ENCODE measurements at regions of chr5 and their contacts with region 1.

Region 1: DNA sequence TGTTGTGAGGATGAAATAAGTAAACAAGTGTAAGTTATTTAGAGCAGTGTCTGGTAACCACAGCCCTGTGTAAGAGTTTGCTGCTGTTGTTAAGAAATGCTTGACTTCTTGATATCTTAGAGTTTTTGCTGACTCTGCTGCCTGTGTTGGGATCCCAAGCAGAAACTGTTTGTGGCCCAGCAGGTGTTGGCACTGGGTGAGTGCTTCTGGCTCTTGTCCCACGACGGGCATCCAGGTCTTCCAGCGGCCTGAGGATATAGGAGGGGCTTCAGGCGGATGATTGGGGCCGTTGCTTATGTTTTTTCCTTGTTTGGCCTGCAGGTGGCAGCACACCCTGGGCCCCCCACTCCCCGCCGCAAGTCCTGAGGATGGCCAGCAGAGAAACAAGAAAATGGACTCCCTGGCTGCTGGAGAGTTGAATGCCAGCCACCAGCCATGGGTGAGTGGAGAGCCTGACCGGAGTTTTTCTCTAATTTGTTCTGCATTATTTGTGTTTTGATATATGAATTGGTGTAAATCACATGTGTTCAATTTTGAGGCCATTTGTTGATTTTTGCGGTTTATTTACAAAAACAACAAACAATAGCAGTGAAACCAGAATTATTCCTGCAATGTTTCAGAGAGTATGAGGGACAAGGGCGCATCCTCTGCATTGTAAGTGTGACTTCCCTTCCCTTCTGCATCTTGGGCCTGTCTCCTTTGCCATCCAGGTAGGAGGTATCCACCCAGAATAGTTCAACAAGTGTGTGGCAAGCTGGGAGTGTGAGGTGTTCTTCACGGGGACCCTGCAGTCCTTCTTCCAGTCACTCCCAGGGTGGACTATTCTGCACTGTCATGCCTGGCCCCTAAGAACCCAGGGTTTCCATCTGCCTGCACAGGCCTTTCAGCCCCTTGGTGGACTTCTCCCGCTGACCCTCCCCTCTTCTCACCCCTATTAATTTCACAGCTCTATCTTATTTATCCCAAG is 50.3 kb downstream of the SLC22A5 start:
- DNase-seq: peak; percentile 27 to 84 (median 54)
- ATAC-seq: peak; percentile 76
- H3K4me3 ChIP-seq: peak overlapping the region; percentile 37
- H3K4me3 Mint-ChIP-seq: peak overlapping the region; percentile 85
- H3K27ac ChIP-seq: peak overlapping the region; percentile 81 to 88
- H3K27ac Mint-ChIP-seq: peak overlapping the region; percentile 92
- H3K4me1 ChIP-seq: peaks cover 91% of the 10 kb centered on the region
- H3K4me1 Mint-ChIP-seq: peaks cover 94% of the 10 kb centered on the region
- H3K27me3 ChIP-seq: no peaks in the 10 kb centered on the region
- H3K27me3 Mint-ChIP-seq: no peaks in the 10 kb centered on the region
- CTCF ChIP-seq: peak; percentile 85

Region 2: GRCh38 chr5:132437604-132438266 is 17.9 kb after region 1 on chr5:
- CTCF ChIA-PET with region 1: interaction called, 3 read pairs
- POLR2A ChIA-PET with region 1: interaction called, 3 read pairs
- intact Hi-C with region 1: loop called in 1 of 2 experiments (anchors 2 kb)
- DNase-seq: peak; percentile 25 to 87 (median 62)
- ATAC-seq: peak; percentile 96
- H3K4me3 ChIP-seq: peak overlapping the region; percentile 21
- H3K4me3 Mint-ChIP-seq: peak overlapping the region; percentile 42
- H3K27ac ChIP-seq: peak overlapping the region; percentile 67 to 72
- H3K27ac Mint-ChIP-seq: peak overlapping the region; percentile 90
- H3K4me1 ChIP-seq: peaks cover 87% of the 10 kb centered on the region
- H3K4me1 Mint-ChIP-seq: peaks cover 89% of the 10 kb centered on the region
- H3K27me3 ChIP-seq: no peaks in the 10 kb centered on the region
- H3K27me3 Mint-ChIP-seq: no peaks in the 10 kb centered on the region
- CTCF ChIP-seq: no peak

Region 3: GRCh38 chr5:132466433-132467286 is 46.9 kb after region 1 on chr5:
- CTCF ChIA-PET with region 1: interaction called, 4 read pairs
- POLR2A ChIA-PET with region 1: interaction called, 645 read pairs
- intact Hi-C with region 1: loop called (anchors 2 to 5 kb)
- DNase-seq: peak in 13 of 14 experiments; percentile 56 to 90 (median 66)
- ATAC-seq: peak; percentile 63
- H3K4me3 ChIP-seq: peak overlapping the region; percentile 34
- H3K4me3 Mint-ChIP-seq: peak overlapping the region; percentile 85
- H3K27ac ChIP-seq: peak overlapping the region; percentile 69 to 73
- H3K27ac Mint-ChIP-seq: peak overlapping the region; percentile 97
- H3K4me1 ChIP-seq: peaks cover 88% of the 10 kb centered on the region
- H3K4me1 Mint-ChIP-seq: peaks cover 99% of the 10 kb centered on the region
- H3K27me3 ChIP-seq: no peaks in the 10 kb centered on the region
- H3K27me3 Mint-ChIP-seq: no peaks in the 10 kb centered on the region
- CTCF ChIP-seq: no peak

Region 4: GRCh38 chr5:132473019-132473531 is 53.3 kb after region 1 on chr5:
- CTCF ChIA-PET with region 1: no interaction called
- POLR2A ChIA-PET with region 1: interaction called, 645 read pairs
- intact Hi-C with region 1: loop called (anchors 5 kb)
- DNase-seq: peak; percentile 73 to 96 (median 81)
- ATAC-seq: peak; percentile 68
- H3K4me3 ChIP-seq: no peak overlapping the region
- H3K4me3 Mint-ChIP-seq: peak overlapping the region; percentile 74
- H3K27ac ChIP-seq: peak overlapping the region; percentile 70 to 77
- H3K27ac Mint-ChIP-seq: peak overlapping the region; percentile 97
- H3K4me1 ChIP-seq: peaks cover 92% of the 10 kb centered on the region
- H3K4me1 Mint-ChIP-seq: peaks cover 96% of the 10 kb centered on the region
- H3K27me3 ChIP-seq: no peaks in the 10 kb centered on the region
- H3K27me3 Mint-ChIP-seq: peaks cover 10% of the 10 kb centered on the region
- CTCF ChIP-seq: no peak

Region 5: GRCh38 chr5:132500931-132501630 is 81.3 kb after region 1 on chr5:
- CTCF ChIA-PET with region 1: interaction called, 5 read pairs
- POLR2A ChIA-PET with region 1: interaction called, 30 read pairs
- intact Hi-C with region 1: loop called in 1 of 2 experiments (anchors 1 kb)
- DNase-seq: peak; percentile 63 to 90 (median 73)
- ATAC-seq: peak; percentile 26
- H3K4me3 ChIP-seq: no peak overlapping the region
- H3K4me3 Mint-ChIP-seq: no peak overlapping the region
- H3K27ac ChIP-seq: peak overlapping the region in 1 of 2 donors; percentile 37
- H3K27ac Mint-ChIP-seq: peak overlapping the region; percentile 65
- H3K4me1 ChIP-seq: peaks cover 49% of the 10 kb centered on the region
- H3K4me1 Mint-ChIP-seq: peaks cover 29% of the 10 kb centered on the region
- H3K27me3 ChIP-seq: no peaks in the 10 kb centered on the region
- H3K27me3 Mint-ChIP-seq: peaks cover 3% of the 10 kb centered on the region
- CTCF ChIP-seq: peak; percentile 88

Region 6: DNA sequence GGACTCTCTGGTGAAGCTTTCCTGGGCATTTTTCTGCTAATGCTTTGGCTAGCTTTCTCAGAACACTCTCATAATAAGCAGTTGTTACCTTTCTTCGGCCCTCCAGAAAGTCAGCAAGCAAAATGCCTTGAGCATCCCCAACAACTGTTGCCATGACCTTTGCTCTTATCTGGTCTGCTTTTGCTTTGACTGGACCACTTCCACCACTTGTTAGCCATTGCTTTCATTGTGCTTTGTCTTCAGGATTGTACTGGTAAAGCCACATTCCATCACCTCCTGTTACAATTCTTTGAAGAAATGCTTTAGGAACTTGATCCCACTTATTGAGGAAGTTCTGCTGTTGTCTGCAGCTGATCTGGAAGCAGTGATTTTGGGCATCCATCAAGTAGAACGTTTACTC is 172.7 kb after region 1 on chr5:
- CTCF ChIA-PET with region 1: no interaction called
- POLR2A ChIA-PET with region 1: no interaction called
- intact Hi-C with region 1: no loop called
- DNase-seq: no peak
- ATAC-seq: no peak
- H3K4me3 ChIP-seq: no peak overlapping the region
- H3K4me3 Mint-ChIP-seq: no peak overlapping the region
- H3K27ac ChIP-seq: no peak overlapping the region
- H3K27ac Mint-ChIP-seq: no peak overlapping the region
- H3K4me1 ChIP-seq: no peaks in the 10 kb centered on the region
- H3K4me1 Mint-ChIP-seq: no peaks in the 10 kb centered on the region
- H3K27me3 ChIP-seq: no peaks in the 10 kb centered on the region
- H3K27me3 Mint-ChIP-seq: no peaks in the 10 kb centered on the region
- CTCF ChIP-seq: no peak